ENCODE measurements at regions of chr2 and their contacts with region 1.

Region 1: GRCh38 chr2:73385595-73386341 is at the start of gene ALMS1:
- DNase-seq: peak; percentile 94
- ATAC-seq: peak; percentile 89
- H3K4me3 Mint-ChIP-seq: peak within 1 kb of the TSS; percentile 91
- H3K27ac Mint-ChIP-seq: peak within 1 kb of the TSS; percentile 91
- H3K4me1 Mint-ChIP-seq: peaks cover 27% of the 10 kb centered on the region
- H3K27me3 Mint-ChIP-seq: no peaks in the 10 kb centered on the region
- total RNA-seq, gene ALMS1: 19.2 to 24.0 TPM

Region 2: GRCh38 chr2:73233154-73233931 is 152.4 kb before region 1 on chr2 and contains the start of gene PRADC1:
- CTCF ChIA-PET with region 1: no interaction called
- POLR2A ChIA-PET with region 1: interaction called, 3 read pairs
- intact Hi-C with region 1: loop called (anchors 1 to 2 kb)
- DNase-seq: peak; percentile 96
- ATAC-seq: peak; percentile 89
- H3K4me3 Mint-ChIP-seq: peak within 1 kb of the TSS; percentile 92
- H3K27ac Mint-ChIP-seq: peak within 1 kb of the TSS; percentile 98
- H3K4me1 Mint-ChIP-seq: peaks cover 32% of the 10 kb centered on the region
- H3K27me3 Mint-ChIP-seq: no peaks in the 10 kb centered on the region
- total RNA-seq, gene PRADC1: 11.8 to 12.1 TPM

Region 3: GRCh38 chr2:73293534-73294171 is 92.1 kb before region 1 on chr2 and contains the start of gene EGR4:
- CTCF ChIA-PET with region 1: interaction called, 5 read pairs
- POLR2A ChIA-PET with region 1: no interaction called
- intact Hi-C with region 1: loop called (anchors 1 kb)
- DNase-seq: peak; percentile 95
- ATAC-seq: peak; percentile 96
- H3K4me3 Mint-ChIP-seq: peak within 1 kb of the TSS; percentile 68
- H3K27ac Mint-ChIP-seq: no peak within 1 kb of the TSS
- H3K4me1 Mint-ChIP-seq: peaks cover 12% of the 10 kb centered on the region
- H3K27me3 Mint-ChIP-seq: peaks cover 65% of the 10 kb centered on the region
- total RNA-seq, gene EGR4: 0.18 to 0.41 TPM

Region 4: GRCh38 chr2:73426176-73426575 is 40.4 kb after region 1 on chr2:
- CTCF ChIA-PET with region 1: no interaction called
- POLR2A ChIA-PET with region 1: no interaction called
- intact Hi-C with region 1: no loop called
- DNase-seq: no peak
- ATAC-seq: no peak
- H3K4me3 Mint-ChIP-seq: no peak overlapping the region
- H3K27ac Mint-ChIP-seq: no peak overlapping the region
- H3K4me1 Mint-ChIP-seq: no peaks in the 10 kb centered on the region
- H3K27me3 Mint-ChIP-seq: no peaks in the 10 kb centered on the region

Region 5: DNA sequence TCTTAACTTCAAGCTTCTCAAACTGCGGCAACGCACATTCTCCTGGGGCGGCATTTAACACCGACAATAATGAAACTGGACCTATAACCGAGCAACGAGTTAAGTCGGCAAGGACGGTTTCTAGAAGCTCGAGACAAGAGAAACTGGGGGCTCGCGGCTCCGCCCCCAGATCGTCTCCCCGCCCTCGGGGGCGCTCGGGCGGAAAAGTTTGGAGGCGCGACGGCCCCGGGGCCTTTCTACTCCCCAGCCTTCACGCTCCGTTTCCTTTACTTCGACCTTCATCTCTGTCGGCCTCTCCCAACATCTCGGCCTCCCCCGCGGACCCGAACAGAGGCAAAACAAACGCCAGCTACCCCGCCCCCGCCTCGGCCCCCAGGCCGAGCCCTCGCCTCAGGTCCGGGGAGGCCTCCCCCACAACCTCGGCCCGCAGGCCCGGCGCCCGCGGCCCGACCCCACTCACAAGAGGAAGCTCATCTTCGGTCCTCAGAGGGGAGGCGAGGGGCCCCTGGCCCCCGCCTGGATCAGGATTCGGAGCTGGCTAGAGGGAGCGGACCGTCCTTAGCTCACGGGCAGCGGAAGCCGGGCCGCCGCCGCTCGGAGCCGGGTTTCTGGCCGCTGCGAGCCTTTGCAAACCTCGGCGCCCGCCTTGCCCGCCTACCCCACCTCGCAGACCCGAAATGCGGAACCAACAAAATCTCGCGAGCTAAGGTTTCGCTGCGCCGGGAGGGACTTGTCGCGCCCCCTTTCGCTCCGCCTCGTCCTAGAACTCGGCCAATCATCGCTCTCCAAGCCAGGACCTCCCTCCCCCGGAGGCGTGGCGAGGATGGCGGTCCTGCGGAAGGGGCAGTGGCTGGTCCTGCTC is 792.7 kb after region 1 on chr2 and contains the start of gene MOB1A:
- CTCF ChIA-PET with region 1: no interaction called
- POLR2A ChIA-PET with region 1: no interaction called
- intact Hi-C with region 1: loop called in 1 of 2 experiments (anchors 5 kb)
- DNase-seq: peak; percentile 99
- ATAC-seq: peak; percentile 95
- H3K4me3 Mint-ChIP-seq: peak within 1 kb of the TSS; percentile 82
- H3K27ac Mint-ChIP-seq: peak within 1 kb of the TSS; percentile 87
- H3K4me1 Mint-ChIP-seq: peaks cover 42% of the 10 kb centered on the region
- H3K27me3 Mint-ChIP-seq: no peaks in the 10 kb centered on the region
- total RNA-seq, gene MOB1A: 96.6 to 149 TPM

Region 6: DNA sequence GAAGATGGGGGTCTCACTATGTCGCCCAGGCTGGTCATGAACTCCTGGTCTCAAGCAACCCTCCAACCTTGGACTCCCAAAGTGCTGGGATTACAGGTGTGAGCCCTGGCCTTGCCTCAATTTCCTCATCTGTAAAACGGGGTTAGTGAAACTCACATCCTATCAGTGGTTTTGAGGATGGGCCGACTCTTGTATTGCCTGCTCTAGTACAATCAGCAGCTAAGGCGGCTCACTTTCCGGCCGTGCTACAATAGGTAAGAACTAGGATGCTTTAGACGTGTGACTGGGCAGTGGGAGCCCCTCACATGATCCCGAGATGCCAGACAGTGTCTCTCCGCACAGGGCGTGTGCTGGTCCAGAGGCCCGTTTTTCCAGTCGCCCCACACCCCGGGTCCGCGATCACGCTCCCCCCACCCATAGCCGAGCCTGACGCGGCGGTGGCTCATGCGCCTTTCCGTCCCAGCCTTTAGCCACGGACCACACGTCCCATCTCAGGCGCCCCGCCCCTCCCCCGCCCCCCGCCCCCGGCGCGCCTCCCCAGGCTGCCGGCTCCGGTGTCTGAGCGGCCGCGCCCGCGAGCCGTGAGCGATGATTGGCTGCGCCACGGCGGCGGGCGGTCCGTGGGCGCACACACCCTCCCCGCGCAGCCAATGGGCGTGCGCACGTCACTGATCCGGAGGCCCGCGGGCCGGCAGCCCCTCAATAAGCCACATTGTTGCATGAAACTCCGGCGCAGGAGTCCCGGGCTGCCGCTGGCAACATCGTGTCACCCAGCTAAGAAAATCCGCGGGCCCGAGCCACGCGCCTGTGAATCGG is 1447.9 kb after region 1 on chr2 and contains the start of gene HK2:
- CTCF ChIA-PET with region 1: no interaction called
- POLR2A ChIA-PET with region 1: no interaction called
- intact Hi-C with region 1: loop called in 1 of 2 experiments (anchors 10 kb)
- DNase-seq: peak; percentile 93
- ATAC-seq: peak; percentile 86
- H3K4me3 Mint-ChIP-seq: peak within 1 kb of the TSS; percentile 89
- H3K27ac Mint-ChIP-seq: peak within 1 kb of the TSS; percentile 95
- H3K4me1 Mint-ChIP-seq: peaks cover 48% of the 10 kb centered on the region
- H3K27me3 Mint-ChIP-seq: no peaks in the 10 kb centered on the region
- total RNA-seq, gene HK2: 84.4 to 105 TPM